Ascending aorta (tissue), 2 donors: ENCODE measurements at regions of chr3 and their contacts with region 1.

Region 1: GRCh38 chr3:160006282-160007163 is 17.9 kb downstream of the IL12A start:
- DNase-seq: no peak
- H3K4me3 ChIP-seq: no peak overlapping the region
- H3K27ac ChIP-seq: no peak overlapping the region
- H3K4me1 ChIP-seq: no peaks in the 10 kb centered on the region
- H3K27me3 ChIP-seq: no peaks in the 10 kb centered on the region
- CTCF ChIP-seq: peak; percentile 54 to 87 (median 71)

Region 2: GRCh38 chr3:159260049-159260662 is 746.4 kb before region 1 on chr3:
- intact Hi-C with region 1: loop called (anchors 5 kb)
- DNase-seq: no peak
- H3K4me3 ChIP-seq: no peak overlapping the region
- H3K27ac ChIP-seq: no peak overlapping the region
- H3K4me1 ChIP-seq: no peaks in the 10 kb centered on the region
- H3K27me3 ChIP-seq: no peaks in the 10 kb centered on the region
- CTCF ChIP-seq: peak; percentile 40 to 61 (median 59)

Region 3: GRCh38 chr3:159616212-159616825 is 390.2 kb before region 1 on chr3:
- intact Hi-C with region 1: loop called (anchors 1 kb)
- DNase-seq: no peak
- H3K4me3 ChIP-seq: no peak overlapping the region
- H3K27ac ChIP-seq: no peak overlapping the region
- H3K4me1 ChIP-seq: no peaks in the 10 kb centered on the region
- H3K27me3 ChIP-seq: no peaks in the 10 kb centered on the region
- CTCF ChIP-seq: peak; percentile 35 to 69 (median 46)

Region 4: DNA sequence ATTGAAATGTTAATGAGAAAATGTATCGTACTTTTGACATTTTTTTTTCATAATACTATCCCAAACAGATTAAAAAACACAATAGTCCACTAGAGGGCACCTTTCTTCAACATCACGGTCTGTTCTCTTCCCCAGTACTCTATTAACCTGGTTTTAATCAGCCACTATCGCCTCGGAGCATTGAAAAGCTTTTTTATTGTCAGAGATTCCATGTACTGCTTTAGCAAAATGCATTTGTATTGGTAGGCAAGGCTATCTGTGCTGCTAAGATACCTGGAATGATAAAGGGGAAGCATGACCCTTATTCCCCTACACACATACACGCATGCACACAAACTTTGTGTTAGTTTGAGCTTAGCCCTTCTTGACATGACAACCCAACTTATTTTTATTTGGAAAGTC is 178.0 kb before region 1 on chr3:
- intact Hi-C with region 1: loop called (anchors 5 kb)
- DNase-seq: no peak
- H3K4me3 ChIP-seq: no peak overlapping the region
- H3K27ac ChIP-seq: no peak overlapping the region
- H3K4me1 ChIP-seq: peaks cover 5 to 28% of the 10 kb centered on the region in 2 donors
- H3K27me3 ChIP-seq: no peaks in the 10 kb centered on the region
- CTCF ChIP-seq: peak in 2 of 3 experiments; percentile 43 to 51

Region 5: GRCh38 chr3:159884661-159885402 is 121.7 kb before region 1 on chr3:
- intact Hi-C with region 1: loop called (anchors 1 kb)
- DNase-seq: no peak
- H3K4me3 ChIP-seq: no peak overlapping the region
- H3K27ac ChIP-seq: no peak overlapping the region
- H3K4me1 ChIP-seq: peaks cover 0 to 13% of the 10 kb centered on the region in 2 donors
- H3K27me3 ChIP-seq: no peaks in the 10 kb centered on the region
- CTCF ChIP-seq: peak in 2 of 3 experiments; percentile 29 to 49

Region 6: DNA sequence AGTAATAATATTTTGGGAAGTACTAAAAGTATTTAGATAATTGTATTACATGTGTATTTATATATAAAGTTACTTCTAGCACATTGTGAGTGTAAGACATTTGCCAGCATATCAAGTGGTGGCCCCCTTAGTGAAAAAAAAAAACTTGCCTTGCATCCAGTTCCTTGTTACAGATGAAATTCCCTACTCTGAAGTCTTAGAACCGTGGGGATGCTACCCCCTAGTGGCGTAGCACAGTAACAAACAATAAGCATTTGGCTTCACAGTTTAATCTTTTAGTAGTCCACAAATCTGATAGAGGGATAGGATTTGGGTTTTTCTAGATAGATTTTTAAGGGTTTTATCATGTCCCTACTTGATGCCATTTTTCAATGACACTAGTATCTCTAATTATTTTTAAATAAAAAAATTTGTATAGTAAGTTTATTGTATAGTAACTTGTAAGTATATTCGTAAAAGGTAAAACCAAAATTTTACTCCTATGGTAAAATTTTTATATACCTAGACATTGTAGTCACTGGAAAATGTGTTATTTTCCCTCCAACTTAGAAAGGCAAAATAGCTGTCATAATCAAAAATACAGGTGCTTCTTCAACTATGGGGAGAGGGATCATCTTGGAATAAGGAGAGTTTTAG is 407.2 kb after region 1 on chr3:
- intact Hi-C with region 1: no loop called
- DNase-seq: peak in 1 of 2 donors; percentile 68
- H3K4me3 ChIP-seq: no peak overlapping the region
- H3K27ac ChIP-seq: no peak overlapping the region
- H3K4me1 ChIP-seq: no peaks in the 10 kb centered on the region
- H3K27me3 ChIP-seq: no peaks in the 10 kb centered on the region
- CTCF ChIP-seq: peak; percentile 52 to 86 (median 83)